ENCODE measurements at regions of chr7 and their contacts with region 1.

Region 1: GRCh38 chr7:43582503-43583423 is at the start of gene STK17A:
- DNase-seq: peak; percentile 87 to 94
- H3K4me3 ChIP-seq: peak within 1 kb of the TSS; percentile 77 to 90 (median 84)
- H3K27ac ChIP-seq: no peak within 1 kb of the TSS
- H3K4me1 ChIP-seq: peaks cover 0 to 12% (median 5%) of the 10 kb centered on the region in 4 experiments; a peak in 6 of 7 replicates
- H3K27me3 ChIP-seq: no peaks in the 10 kb centered on the region; a peak in 3 of 7 replicates
- CTCF ChIP-seq: peak; percentile 99
- EP300 ChIP-seq: 0 out of 3 replicates have a peak, but pooled peaks of 1 of the 2 experiments have one; percentile 45
- POLR2A ChIP-seq: peak in 1 of 2 experiments; percentile 85; a peak in 2 of 3 replicates
- RAD21 ChIP-seq: peak; percentile 94 to 95
- total RNA-seq, gene STK17A: 12.2 and 13.4 TPM in 2 replicates

Region 2: GRCh38 chr7:43520201-43520600 is 62.6 kb before region 1 on chr7:
- CTCF ChIA-PET with region 1: interaction called, 10 read pairs
- POLR2A ChIA-PET with region 1: interaction called, 3 read pairs
- DNase-seq: no peak
- H3K4me3 ChIP-seq: no peak overlapping the region
- H3K27ac ChIP-seq: no peak overlapping the region
- H3K4me1 ChIP-seq: no peaks in the 10 kb centered on the region
- H3K27me3 ChIP-seq: no peaks in the 10 kb centered on the region
- CTCF ChIP-seq: no peak
- EP300 ChIP-seq: no peak
- POLR2A ChIP-seq: no peak
- RAD21 ChIP-seq: no peak

Region 3: DNA sequence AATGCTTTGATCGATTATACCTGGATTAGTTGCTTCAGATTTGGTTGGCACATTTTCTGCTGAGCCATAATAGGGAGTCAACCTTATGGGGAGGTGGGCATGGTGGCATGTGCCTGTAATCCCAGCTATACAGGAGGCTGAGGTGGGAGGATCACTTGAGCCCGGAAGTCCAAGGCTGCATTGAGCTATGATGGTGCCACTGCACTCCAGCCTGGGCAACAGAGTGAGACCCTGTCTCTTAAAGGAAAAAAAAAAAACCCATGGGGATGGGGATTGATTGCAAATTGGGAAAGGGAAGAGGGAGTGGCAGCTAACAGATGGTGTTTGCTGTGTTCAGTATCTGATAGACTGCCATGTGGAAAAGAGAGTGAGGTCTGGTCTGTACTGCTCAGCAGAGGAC is 11.3 kb after region 1 on chr7:
- CTCF ChIA-PET with region 1: interaction called, 12 read pairs
- POLR2A ChIA-PET with region 1: interaction called, 3 read pairs
- DNase-seq: no peak
- H3K4me3 ChIP-seq: no peak overlapping the region
- H3K27ac ChIP-seq: no peak overlapping the region
- H3K4me1 ChIP-seq: peaks cover 0 to 2% (median 0%) of the 10 kb centered on the region in 4 experiments; a peak in 1 of 7 replicates
- H3K27me3 ChIP-seq: no peaks in the 10 kb centered on the region
- CTCF ChIP-seq: no peak
- EP300 ChIP-seq: no peak
- POLR2A ChIP-seq: no peak
- RAD21 ChIP-seq: no peak

Region 4: GRCh38 chr7:43647673-43648472 is 65.1 kb after region 1 on chr7:
- CTCF ChIA-PET with region 1: interaction called, 12 read pairs
- POLR2A ChIA-PET with region 1: interaction called, 5 read pairs
- DNase-seq: no peak
- H3K4me3 ChIP-seq: no peak overlapping the region
- H3K27ac ChIP-seq: peak overlapping the region; percentile 71
- H3K4me1 ChIP-seq: peaks cover 13 to 23% (median 17%) of the 10 kb centered on the region in 4 experiments
- H3K27me3 ChIP-seq: no peaks in the 10 kb centered on the region
- CTCF ChIP-seq: no peak
- EP300 ChIP-seq: no peak
- POLR2A ChIP-seq: no peak
- RAD21 ChIP-seq: no peak

Region 5: GRCh38 chr7:43711503-43711902 is 128.7 kb after region 1 on chr7:
- CTCF ChIA-PET with region 1: interaction called, 12 read pairs
- POLR2A ChIA-PET with region 1: no interaction called
- DNase-seq: no peak
- H3K4me3 ChIP-seq: no peak overlapping the region
- H3K27ac ChIP-seq: no peak overlapping the region
- H3K4me1 ChIP-seq: peaks cover 0 to 3% (median 0%) of the 10 kb centered on the region in 4 experiments; a peak in 1 of 7 replicates
- H3K27me3 ChIP-seq: no peaks in the 10 kb centered on the region
- CTCF ChIP-seq: no peak
- EP300 ChIP-seq: no peak
- POLR2A ChIP-seq: no peak
- RAD21 ChIP-seq: no peak

Measured in H1 (cell line).